ENCODE measurements at regions of chr6 and their contacts with region 1.

Region 1: DNA sequence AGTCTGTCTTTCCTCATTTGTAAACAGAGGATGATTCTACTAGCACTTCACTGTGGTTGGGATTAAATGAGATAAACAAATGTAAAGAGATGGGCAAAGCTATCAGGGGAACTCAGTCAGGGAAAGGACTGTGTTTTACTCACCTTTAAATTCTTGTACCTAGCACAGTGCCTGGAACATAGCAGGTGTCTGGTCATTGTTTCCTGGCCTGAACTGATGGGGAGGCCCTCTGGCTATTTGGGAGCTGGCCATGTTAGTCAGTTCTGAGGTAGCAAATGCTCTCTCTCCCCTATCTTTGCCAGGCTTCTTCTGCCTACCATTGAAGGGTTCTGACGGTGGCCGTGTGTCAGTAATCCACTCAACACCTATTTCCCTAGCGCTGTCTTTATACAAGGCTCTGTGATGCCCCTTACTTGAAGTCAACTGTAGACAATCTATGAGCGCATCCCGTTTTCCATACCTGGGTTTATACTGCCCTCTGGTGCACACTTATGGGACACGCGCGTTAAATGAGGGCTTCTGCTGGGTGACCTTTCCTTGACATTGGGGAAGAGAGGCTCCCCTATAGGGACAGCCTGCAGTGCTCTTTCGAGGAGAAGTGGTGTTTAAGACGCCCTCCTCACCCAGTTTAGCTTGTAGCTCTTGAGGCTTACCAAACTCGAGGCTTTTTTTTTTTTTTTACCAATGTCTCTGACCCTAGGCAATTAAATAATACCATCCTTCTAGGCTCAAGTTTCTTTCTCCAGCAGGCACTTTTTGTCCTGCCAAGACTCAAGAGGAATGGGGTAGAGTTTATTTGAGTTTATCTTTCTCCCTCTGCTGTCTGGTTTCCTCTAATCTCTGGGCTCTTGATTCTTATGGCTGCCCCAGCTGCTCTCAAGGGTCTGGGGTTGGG is 4.0 kb upstream of the SPATS1 start:
- DNase-seq: no peak
- H3K4me3 ChIP-seq: no peak overlapping the region
- H3K27ac ChIP-seq: no peak overlapping the region
- H3K4me1 ChIP-seq: peaks cover 0 to 19% (median 0%) of the 10 kb centered on the region in 3 donors
- H3K27me3 ChIP-seq: peaks cover 0 to 40% (median 5%) of the 10 kb centered on the region in 4 donors
- CTCF ChIP-seq: peak; percentile 54 to 83 (median 66)
- POLR2A ChIP-seq: no peak

Region 2: GRCh38 chr6:44265007-44265721 is 73.3 kb before region 1 on chr6 and contains the start of gene NFKBIE:
- intact Hi-C with region 1: loop called (anchors 5 kb)
- DNase-seq: no peak
- H3K4me3 ChIP-seq: peak within 1 kb of the TSS; percentile 67 to 96 (median 82)
- H3K27ac ChIP-seq: peak within 1 kb of the TSS; percentile 77 to 92 (median 84)
- H3K4me1 ChIP-seq: peaks cover 26 to 44% (median 26%) of the 10 kb centered on the region in 3 donors
- H3K27me3 ChIP-seq: peaks cover 0 to 22% (median 4%) of the 10 kb centered on the region in 4 donors
- CTCF ChIP-seq: peak in 2 of 6 experiments; percentile 4
- POLR2A ChIP-seq: peak in 2 of 4 donors; percentile 41 to 83
- total RNA-seq, gene NFKBIE: 8.6 to 11.2 (median 10.2) TPM

Region 3: DNA sequence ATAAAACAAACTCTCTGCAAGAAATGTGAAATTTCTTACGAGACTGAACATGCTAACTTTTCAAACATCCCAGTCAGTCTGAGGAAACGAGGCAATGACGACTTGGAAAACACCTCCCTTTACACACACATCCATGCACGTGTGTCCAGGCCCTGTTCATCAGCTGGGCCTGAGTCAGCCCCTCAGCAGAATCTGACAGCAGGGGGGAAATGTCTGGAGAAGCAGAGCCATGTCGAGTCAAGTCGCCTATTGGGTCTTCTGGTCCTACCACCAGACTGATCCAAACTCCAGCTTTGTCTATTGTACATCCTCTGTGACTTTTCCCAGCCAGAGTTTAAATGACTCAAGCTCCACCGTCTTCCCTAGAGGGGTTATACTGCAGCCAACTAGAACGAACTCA is 302.9 kb after region 1 on chr6:
- intact Hi-C with region 1: no loop called
- DNase-seq: no peak
- H3K4me3 ChIP-seq: no peak overlapping the region
- H3K27ac ChIP-seq: no peak overlapping the region
- H3K4me1 ChIP-seq: no peaks in the 10 kb centered on the region
- H3K27me3 ChIP-seq: peaks cover 0 to 8% (median 0%) of the 10 kb centered on the region in 4 donors
- CTCF ChIP-seq: no peak
- POLR2A ChIP-seq: no peak

Measured in esophagus squamous epithelium (tissue), 5 donors.